ENCODE measurements at regions of chr11 and their contacts with region 1.

Region 1: DNA sequence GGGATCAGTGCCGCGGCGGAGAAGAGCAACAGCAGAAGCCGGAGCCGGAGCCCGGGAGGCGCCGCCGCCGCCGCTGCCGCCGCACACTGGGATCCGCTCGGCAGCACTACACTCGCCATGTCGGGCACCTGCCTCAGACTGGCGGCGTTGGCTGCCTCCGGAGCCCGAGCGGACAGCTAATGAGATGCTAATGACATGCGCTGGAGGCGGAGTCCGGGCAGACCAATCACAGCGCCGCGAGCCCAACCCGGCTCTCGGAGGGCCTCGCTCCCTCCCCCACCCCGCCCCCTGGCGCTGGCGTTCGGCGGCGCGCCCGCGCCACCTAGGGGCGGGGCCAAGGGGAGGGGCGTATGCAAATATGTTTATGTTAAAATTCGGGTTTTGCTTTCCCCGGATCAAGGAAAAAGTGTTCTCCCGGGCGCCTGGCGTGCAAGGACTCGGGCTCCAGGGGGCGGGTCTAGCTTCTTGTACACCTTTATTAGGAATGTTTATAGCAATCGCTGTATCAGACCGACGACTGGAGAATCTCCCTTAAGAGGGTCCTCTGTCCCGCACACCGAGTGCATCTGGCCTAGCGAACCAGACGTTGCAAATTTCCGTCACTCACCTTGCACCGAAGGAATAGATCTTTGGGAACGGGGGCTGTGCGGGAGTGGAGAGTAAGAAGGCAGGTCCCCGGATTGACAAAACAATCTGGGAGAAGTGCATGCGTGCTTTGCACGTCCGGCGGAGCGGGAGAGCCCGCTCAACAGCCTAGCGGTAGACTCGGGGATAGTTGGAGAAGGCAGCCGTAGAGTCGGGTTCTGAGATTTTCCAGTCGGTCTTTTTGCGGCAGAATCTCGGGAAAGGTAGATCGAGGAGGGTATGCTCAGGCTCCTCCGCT is at the start of gene CADM1:
- DNase-seq: peak; percentile 87
- ATAC-seq: peak; percentile 91
- H3K4me3 Mint-ChIP-seq: peak within 1 kb of the TSS; percentile 64
- H3K27ac Mint-ChIP-seq: no peak within 1 kb of the TSS
- H3K4me1 Mint-ChIP-seq: peaks cover 10% of the 10 kb centered on the region
- H3K27me3 Mint-ChIP-seq: peaks cover 28% of the 10 kb centered on the region
- total RNA-seq, gene CADM1: 0.58 to 0.91 TPM

Region 2: DNA sequence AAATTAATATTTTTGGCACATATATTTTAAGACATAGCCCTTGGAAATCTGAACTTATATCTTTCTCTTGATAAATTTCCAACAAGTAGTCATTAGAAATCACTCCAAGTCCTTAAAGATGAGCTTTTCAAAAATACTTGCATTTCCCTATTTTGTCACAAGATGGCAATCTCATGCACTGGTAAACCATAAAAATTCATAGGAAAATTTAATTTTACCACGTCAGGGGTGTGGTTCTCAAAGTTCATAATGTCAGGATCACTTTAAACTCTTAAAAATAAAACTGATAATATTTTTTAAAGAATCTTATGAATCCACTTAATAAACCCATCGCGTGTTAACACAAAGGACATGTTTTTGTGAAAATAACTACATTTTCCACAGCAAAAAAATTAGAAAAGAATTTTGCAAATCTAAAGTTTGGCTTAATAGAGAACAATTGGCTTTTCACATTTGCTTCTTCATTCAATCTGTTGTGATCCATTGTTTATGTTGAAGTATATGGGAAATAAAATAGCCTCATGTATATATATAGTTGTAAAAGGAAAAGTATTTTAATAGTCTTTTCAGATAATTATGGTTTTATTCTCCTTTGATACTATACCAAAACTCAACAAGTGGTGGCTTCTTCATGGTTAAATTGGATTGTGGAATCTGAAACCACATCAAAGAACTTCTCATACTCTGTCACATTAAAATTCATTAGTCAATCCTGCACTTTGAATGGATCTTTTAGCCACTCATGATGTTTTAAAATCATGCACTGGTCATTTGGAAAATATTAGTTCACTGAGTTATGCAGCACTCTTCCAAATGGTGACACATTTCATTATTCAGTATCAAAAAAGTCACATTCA is 169.4 kb before region 1 on chr11:
- CTCF ChIA-PET with region 1: no interaction called
- POLR2A ChIA-PET with region 1: no interaction called
- intact Hi-C with region 1: loop called (anchors 2 to 5 kb)
- DNase-seq: no peak
- ATAC-seq: no peak
- H3K4me3 Mint-ChIP-seq: no peak overlapping the region
- H3K27ac Mint-ChIP-seq: no peak overlapping the region
- H3K4me1 Mint-ChIP-seq: no peaks in the 10 kb centered on the region
- H3K27me3 Mint-ChIP-seq: peaks cover 3% of the 10 kb centered on the region

Region 3: DNA sequence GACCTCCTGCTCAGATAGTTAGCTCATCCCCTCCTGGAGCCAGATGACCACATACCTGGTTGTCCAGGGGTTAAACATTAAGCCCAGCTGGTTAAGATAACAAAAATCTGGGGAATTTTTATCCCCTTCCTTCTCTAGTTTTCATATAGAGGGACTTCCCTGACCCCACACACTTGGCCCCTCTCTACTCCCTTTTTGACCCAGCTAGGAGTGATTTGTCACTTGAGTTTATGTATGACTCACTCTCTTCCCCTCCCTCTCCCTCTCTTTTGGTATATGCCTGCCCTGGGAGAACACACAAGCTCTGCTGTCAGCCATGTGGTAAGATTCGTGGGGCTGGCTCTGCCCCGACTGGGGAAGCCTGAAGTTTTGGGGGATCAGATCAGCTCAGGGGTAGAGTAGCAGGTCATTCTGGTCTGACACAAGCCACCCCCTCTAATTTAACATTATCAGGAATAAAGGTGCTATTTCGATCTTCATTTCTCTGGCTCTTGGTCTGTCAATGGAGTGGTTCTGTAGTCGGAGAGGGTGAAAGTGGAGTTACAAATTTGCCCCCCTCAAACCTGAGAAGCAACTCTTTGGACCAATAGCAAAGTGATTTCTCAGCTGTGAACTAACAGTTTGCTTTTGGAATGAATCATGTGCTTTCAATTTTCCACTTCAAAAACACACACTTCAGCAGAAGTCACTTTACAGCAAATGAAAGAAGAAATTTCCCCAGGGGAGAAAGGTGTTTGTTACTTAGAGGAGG is 415.0 kb after region 1 on chr11:
- CTCF ChIA-PET with region 1: no interaction called
- POLR2A ChIA-PET with region 1: no interaction called
- intact Hi-C with region 1: loop called in 1 of 2 experiments (anchors 5 kb)
- DNase-seq: peak; percentile 39
- ATAC-seq: peak; percentile 91
- H3K4me3 Mint-ChIP-seq: no peak overlapping the region
- H3K27ac Mint-ChIP-seq: peak overlapping the region; percentile 77
- H3K4me1 Mint-ChIP-seq: peaks cover 25% of the 10 kb centered on the region
- H3K27me3 Mint-ChIP-seq: peaks cover 22% of the 10 kb centered on the region

Region 4: DNA sequence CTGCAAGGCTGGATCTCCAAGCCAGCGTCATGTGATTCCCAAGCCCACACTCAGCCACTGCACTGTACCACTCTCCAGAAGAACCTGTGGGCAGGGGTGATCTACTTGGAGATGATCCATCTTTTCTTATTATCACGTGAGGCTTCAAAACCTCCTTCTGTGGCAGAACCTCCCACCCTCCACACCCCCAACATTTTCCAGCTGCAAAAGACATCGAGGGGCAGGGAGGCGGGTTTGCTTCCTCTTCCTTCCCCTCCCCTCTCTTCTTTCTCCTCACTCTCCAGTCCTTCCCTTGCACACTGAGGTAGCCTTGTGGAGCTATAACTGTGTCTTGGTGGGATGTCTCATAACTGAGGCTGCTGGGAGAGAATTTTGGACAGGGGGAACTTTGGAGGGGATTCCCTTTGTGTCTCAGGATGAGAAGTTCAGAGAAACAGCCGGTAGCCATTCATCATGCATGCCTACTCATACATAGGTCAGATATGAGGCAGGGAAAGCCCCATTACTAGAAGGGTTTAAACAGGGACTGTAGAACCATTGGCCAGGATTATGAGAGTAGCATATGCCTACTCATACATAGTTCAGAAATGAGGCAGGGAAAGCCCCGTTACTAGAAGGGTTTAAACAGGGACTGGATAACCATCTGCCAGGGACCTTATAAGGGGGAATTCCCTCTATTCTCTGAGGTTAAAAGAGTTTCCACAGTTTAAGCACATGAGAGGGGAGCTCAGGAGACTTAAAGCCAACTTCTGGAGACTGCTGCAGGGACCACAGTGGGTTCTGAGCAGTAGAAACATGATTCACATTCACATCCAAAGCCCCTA is 420.4 kb after region 1 on chr11:
- CTCF ChIA-PET with region 1: no interaction called
- POLR2A ChIA-PET with region 1: no interaction called
- intact Hi-C with region 1: loop called (anchors 1 to 5 kb)
- DNase-seq: peak; percentile 54
- ATAC-seq: peak; percentile 98
- H3K4me3 Mint-ChIP-seq: no peak overlapping the region
- H3K27ac Mint-ChIP-seq: no peak overlapping the region
- H3K4me1 Mint-ChIP-seq: peaks cover 27% of the 10 kb centered on the region
- H3K27me3 Mint-ChIP-seq: peaks cover 34% of the 10 kb centered on the region